Prostate gland (tissue), 2 donors: ENCODE measurements at regions of chr10 and their contacts with region 1.

Region 1: DNA sequence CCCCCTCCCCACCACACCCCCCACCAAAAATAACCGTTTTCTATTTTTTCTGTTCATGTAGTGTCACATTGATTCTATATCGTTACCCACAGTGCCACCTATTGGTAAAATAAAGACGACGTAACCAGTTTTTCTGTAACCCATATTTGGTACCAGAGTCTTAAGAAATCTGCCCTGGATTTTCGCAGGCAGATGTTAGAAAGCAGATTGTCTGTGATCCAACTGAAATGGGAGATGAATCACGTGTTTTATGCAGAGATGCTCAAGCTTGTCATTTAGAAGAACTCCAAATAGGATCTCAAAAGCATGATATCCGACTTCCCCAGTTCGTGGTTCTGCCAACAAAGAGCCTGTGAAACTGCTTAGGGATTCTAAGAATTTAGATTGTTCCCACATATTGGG is 261.1 kb upstream of the CSTF2T start:
- DNase-seq: no peak
- H3K4me3 ChIP-seq: no peak overlapping the region
- H3K27ac ChIP-seq: no peak overlapping the region
- H3K4me1 ChIP-seq: no peaks in the 10 kb centered on the region
- H3K27me3 ChIP-seq: no peaks in the 10 kb centered on the region
- CTCF ChIP-seq: peak in 3 of 4 experiments; percentile 38 to 59 (median 46)
- POLR2A ChIP-seq: no peak

Region 2: GRCh38 chr10:51063659-51064535 is 896.6 kb before region 1 on chr10:
- intact Hi-C with region 1: loop called (anchors 2 kb)
- DNase-seq: no peak
- H3K4me3 ChIP-seq: no peak overlapping the region
- H3K27ac ChIP-seq: no peak overlapping the region
- H3K4me1 ChIP-seq: no peaks in the 10 kb centered on the region
- H3K27me3 ChIP-seq: no peaks in the 10 kb centered on the region
- CTCF ChIP-seq: peak in 3 of 4 experiments; percentile 53 to 72 (median 65)
- POLR2A ChIP-seq: no peak

Region 3: DNA sequence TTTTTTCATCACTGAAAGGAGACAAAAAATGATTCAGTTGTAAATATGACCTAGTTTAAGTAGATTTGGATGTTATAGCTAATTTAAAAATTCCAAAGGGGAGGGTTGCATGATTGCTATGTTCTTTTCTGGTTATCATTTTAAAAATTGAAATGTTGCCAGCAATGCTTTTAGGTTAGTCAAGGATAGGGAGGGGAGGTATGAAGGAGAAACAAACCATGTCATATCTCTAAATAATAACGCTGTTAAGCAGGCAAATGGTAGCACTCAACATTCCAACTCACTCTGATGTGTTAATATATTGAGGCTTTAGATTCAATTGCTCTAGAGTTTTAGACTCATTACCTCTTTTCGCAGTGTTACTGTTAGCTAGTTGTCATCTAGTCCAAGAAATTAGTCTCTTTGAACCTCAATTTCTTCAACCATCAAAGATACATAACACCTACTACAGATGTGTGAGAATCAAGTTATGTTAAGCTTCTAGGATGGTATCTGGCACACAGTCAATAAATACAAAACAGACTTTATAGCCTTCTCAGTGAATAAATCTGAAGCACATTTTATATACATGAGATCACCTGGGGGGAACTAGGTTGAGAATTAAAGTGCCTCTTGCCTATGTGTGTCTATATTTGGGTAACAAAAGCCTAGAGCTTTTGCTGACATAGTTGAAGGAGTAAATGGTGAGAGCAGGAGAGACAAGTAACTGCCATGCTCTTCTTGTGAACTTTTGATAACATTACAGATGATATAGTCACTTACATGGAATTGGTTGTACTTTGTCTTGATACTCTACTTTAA is 386.0 kb before region 1 on chr10:
- intact Hi-C with region 1: no loop called
- DNase-seq: no peak
- H3K4me3 ChIP-seq: no peak overlapping the region
- H3K27ac ChIP-seq: no peak overlapping the region
- H3K4me1 ChIP-seq: no peaks in the 10 kb centered on the region
- H3K27me3 ChIP-seq: no peaks in the 10 kb centered on the region
- CTCF ChIP-seq: no peak
- POLR2A ChIP-seq: no peak

Region 4: GRCh38 chr10:51937308-51938135 is 23.0 kb before region 1 on chr10:
- intact Hi-C with region 1: no loop called
- DNase-seq: no peak
- H3K4me3 ChIP-seq: no peak overlapping the region
- H3K27ac ChIP-seq: no peak overlapping the region
- H3K4me1 ChIP-seq: no peaks in the 10 kb centered on the region
- H3K27me3 ChIP-seq: no peaks in the 10 kb centered on the region
- CTCF ChIP-seq: no peak
- POLR2A ChIP-seq: no peak